Sigmoid colon (tissue), 7 donors: ENCODE measurements at regions of chr10 and their contacts with region 1.

Region 1: DNA sequence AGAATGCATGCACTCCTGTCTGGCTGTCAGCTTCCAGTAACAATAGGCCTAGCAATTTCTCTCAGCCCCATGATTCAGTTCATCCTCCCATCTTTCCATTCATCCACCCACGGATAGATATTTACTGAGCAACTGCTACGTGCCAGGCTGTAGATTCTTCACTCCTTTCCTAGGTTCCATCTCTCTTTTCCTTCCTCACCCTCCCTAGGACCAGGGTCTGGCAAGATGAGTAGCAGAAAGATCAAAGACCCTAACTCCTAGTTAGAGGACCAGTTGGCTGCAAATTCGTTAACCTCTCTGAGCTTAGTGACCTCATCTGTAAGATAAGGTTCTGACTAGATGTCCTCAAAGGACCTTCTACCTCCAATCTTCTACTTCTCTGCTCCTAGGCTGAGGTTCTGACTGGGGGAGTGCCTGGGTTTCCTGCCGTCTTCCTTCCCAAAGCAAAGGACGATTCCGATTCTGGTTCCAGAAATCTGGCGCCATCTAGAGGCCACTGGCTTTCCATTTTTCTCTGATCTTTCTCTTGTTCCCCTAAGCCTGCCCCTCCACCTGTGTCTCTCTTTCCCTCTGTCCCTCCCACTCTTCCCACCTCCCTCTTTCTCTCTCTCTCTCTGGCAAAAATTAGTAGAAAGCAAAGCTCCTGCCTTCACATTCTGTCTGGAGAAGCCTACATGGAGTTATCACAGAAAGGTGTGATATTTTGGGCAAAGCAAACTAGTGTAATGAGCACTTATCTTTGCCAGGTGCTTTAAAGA is 26.2 kb downstream of the TBATA start:
- DNase-seq: peak; percentile 85
- H3K4me3 ChIP-seq: no peak overlapping the region
- H3K27ac ChIP-seq: no peak overlapping the region
- H3K4me1 ChIP-seq: peaks cover 0 to 3% (median 0%) of the 10 kb centered on the region in 4 donors
- H3K27me3 ChIP-seq: no peaks in the 10 kb centered on the region
- CTCF ChIP-seq: peak; percentile 57 to 77 (median 64)
- EP300 ChIP-seq: no peak
- POLR2A ChIP-seq: no peak

Region 2: GRCh38 chr10:70558871-70559810 is 199.8 kb before region 1 on chr10:
- intact Hi-C with region 1: loop called (anchors 2 kb)
- DNase-seq: peak; percentile 76
- H3K4me3 ChIP-seq: peak overlapping the region in 1 of 4 donors; percentile 9
- H3K27ac ChIP-seq: no peak overlapping the region
- H3K4me1 ChIP-seq: peaks cover 0 to 20% (median 7%) of the 10 kb centered on the region in 4 donors
- H3K27me3 ChIP-seq: no peaks in the 10 kb centered on the region
- CTCF ChIP-seq: peak in 2 of 4 experiments; percentile 31 to 44
- EP300 ChIP-seq: no peak
- POLR2A ChIP-seq: no peak